GM18951 (cell line): ENCODE measurements at regions of chr19 and their contacts with region 1.

Region 1: GRCh38 chr19:7799640-7800355 is 30.2 kb upstream of the EVI5L start:
- POLR2A ChIP-seq: no peak

Region 2: DNA sequence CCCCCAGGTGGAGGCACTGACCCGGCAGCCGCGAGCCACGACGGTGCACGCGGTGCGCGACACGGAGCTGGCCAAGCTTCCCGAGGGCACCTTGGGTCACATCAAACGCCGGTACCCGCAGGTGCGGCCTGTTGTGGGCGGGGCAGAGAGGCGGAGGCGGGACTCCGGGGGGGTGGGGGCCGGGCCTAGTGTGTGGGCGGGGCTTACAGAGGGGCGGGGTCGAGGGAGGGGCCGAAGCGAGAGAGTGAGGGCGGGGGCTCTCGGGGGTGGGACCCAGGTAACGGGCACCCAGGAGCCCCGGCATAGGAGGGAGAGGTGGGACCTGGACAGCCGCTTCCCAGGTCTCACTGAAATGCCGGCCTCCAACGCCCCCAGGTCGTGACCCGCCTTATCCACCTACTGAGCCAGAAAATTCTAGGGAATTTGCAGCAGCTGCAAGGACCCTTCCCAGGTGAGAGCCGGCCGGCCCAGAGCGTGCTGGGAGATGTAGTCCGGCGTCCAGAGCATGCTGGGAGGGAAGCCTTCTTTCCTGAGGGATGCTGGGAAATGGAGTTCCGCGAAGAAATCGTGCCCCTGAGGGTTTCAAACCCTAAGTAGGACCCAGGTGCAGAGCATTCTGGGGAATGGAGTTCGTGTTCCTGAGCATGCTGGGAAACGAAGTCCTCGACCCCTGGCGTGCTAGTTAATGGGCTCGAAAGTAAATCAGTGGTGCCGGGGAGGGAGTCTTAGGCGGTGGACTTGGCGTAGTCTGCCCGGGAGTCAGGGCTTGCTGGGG is 248.6 kb before region 1 on chr19:
- in situ Hi-C with region 1: loop called (anchors 25 kb)
- POLR2A ChIP-seq: no peak

Region 3: GRCh38 chr19:7641288-7642276 is 158.2 kb before region 1 on chr19:
- in situ Hi-C with region 1: loop called (anchors 10 kb)
- POLR2A ChIP-seq: no peak

Region 4: DNA sequence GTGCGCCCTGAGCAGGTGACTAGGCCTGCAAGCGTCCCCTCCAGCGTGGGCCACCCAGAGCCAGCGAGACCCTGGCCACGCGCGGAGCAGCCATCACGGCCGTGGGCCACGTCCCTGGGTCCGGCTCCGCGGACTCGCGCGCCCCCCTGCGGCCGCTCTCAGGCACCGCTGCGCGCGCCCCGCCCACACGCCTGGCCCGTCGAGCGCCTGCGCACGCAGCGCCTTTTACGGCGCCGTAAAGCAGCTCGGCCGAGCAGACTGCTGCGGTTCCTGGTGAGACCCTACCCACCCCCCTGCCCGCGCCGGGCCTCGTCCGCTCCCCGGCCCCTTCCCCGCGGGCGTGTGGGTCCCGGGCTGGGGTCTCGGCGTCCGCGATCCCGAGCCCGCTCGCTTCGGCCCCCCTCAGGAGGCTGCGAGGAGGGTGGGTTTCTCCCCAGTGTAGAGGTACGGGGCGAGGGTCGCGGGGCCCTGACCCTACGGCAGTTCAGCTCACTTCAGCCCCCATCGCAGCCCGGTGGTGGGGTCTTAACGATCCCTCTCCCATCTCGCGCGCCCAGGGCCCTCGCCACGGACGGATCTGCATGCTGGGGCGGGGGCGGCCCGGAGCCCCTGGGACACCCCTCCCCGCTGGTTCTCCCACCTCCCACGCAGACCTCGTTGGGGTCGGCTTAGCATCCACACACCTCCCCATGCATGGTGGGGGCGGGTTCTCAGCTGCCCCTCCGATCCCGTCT is 119.0 kb before region 1 on chr19 and contains the start of gene TRAPPC5:
- in situ Hi-C with region 1: loop called (anchors 10 kb)
- POLR2A ChIP-seq: peak; percentile 72